ENCODE measurements at regions of chr2 and their contacts with region 1.

Region 1: DNA sequence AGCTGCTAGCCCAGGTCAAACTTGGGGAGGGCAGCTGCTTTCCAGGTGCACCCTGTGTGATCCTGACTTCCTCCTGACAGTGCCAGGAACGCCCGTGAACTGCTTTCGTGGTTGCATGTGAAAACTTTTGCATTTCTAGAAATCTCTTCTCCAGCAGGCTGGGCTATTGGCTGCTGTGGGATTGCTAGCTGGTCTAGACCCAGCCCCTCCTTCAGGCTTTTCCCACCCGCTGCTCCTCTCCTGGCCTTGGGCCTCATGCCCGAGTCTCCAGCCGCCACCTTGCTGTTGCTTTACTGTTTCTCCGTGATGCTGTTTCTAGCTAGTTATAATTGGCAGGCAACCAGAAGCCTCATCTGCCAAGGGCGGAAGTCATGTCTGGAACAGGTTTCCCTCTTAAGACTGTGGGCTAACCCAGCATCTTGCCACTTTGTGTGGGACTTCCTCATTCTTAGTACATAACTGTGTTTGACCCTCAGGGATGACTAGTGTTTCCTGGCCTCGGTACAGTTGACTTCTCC is 27.0 kb upstream of the MGAT4A start:
- DNase-seq: peak; percentile 93 to 98 (median 97)
- H3K4me3 ChIP-seq: peak overlapping the region in 4 of 7 experiments; percentile 12 to 56 (median 40)
- H3K27ac ChIP-seq: peak overlapping the region in 1 of 2 experiments; percentile 10
- H3K4me1 ChIP-seq: peaks cover 21 to 60% (median 48%) of the 10 kb centered on the region in 4 experiments
- H3K27me3 ChIP-seq: no peaks in the 10 kb centered on the region

Region 2: GRCh38 chr2:98731041-98731893 is 26.7 kb before region 1 on chr2 and contains the start of gene MGAT4A:
- CTCF ChIA-PET with region 1: interaction called, 12 read pairs
- POLR2A ChIA-PET with region 1: interaction called, 4 read pairs
- DNase-seq: peak; percentile 55 to 84 (median 75)
- H3K4me3 ChIP-seq: peak within 1 kb of the TSS; percentile 58 to 90 (median 77)
- H3K27ac ChIP-seq: peak within 1 kb of the TSS; percentile 54 to 82
- H3K4me1 ChIP-seq: peaks cover 38 to 65% (median 47%) of the 10 kb centered on the region in 4 experiments
- H3K27me3 ChIP-seq: no peaks in the 10 kb centered on the region

Region 3: GRCh38 chr2:98743835-98744234 is 14.1 kb before region 1 on chr2:
- CTCF ChIA-PET with region 1: interaction called, 12 read pairs
- POLR2A ChIA-PET with region 1: no interaction called
- DNase-seq: no peak
- H3K4me3 ChIP-seq: no peak overlapping the region
- H3K27ac ChIP-seq: no peak overlapping the region
- H3K4me1 ChIP-seq: peaks cover 0 to 23% (median 3%) of the 10 kb centered on the region in 4 experiments
- H3K27me3 ChIP-seq: no peaks in the 10 kb centered on the region

Region 4: GRCh38 chr2:98771721-98772524 is 14.0 kb after region 1 on chr2:
- CTCF ChIA-PET with region 1: interaction called, 10 read pairs
- POLR2A ChIA-PET with region 1: no interaction called
- DNase-seq: peak in 2 of 3 donors; percentile 70 to 77
- H3K4me3 ChIP-seq: peak overlapping the region in 2 of 7 experiments; percentile 11 to 52
- H3K27ac ChIP-seq: no peak overlapping the region
- H3K4me1 ChIP-seq: peaks cover 10 to 58% (median 33%) of the 10 kb centered on the region in 4 experiments
- H3K27me3 ChIP-seq: no peaks in the 10 kb centered on the region

Region 5: GRCh38 chr2:98822301-98823164 is 64.6 kb after region 1 on chr2:
- CTCF ChIA-PET with region 1: interaction called, 10 read pairs
- POLR2A ChIA-PET with region 1: interaction called, 5 read pairs
- DNase-seq: peak; percentile 54 to 74 (median 74)
- H3K4me3 ChIP-seq: peak overlapping the region; percentile 13 to 67 (median 43)
- H3K27ac ChIP-seq: no peak overlapping the region
- H3K4me1 ChIP-seq: peaks cover 8 to 28% (median 16%) of the 10 kb centered on the region in 4 experiments
- H3K27me3 ChIP-seq: peaks cover 0 to 8% (median 0%) of the 10 kb centered on the region in 5 experiments

Measured in common myeloid progenitor, CD34-positive (primary cell).